Naive thymus-derived CD4-positive, alpha-beta T cell (primary cell): ENCODE measurements at regions of chr2 and their contacts with region 1.

Region 1: DNA sequence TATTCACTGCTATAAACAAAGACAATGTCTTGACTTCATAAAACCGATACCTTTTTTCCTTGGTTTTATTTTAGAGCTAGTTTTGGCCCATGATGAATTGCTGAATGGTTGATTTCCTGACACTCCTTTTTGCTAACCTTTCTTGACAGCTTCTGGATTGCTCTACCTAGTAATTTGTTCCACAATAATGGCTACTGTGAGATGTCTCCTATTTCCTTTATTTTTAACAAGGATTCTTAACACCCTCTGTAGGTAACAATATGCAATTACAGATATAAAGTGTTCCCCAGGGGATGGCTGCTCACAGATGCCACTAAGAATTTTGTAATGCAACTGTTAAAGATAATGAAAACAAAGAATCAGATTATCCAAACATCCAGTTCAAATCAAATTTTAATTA is 100.8 kb upstream of the ATP5MC3 start:
- DNase-seq: peak in 5 of 9 donors; percentile 4 to 16 (median 7)
- ATAC-seq: peak; percentile 61
- H3K4me3 ChIP-seq: no peak overlapping the region
- H3K4me3 Mint-ChIP-seq: no peak overlapping the region
- H3K27ac ChIP-seq: no peak overlapping the region
- H3K27ac Mint-ChIP-seq: no peak overlapping the region
- H3K4me1 ChIP-seq: no peaks in the 10 kb centered on the region
- H3K4me1 Mint-ChIP-seq: no peaks in the 10 kb centered on the region
- H3K27me3 ChIP-seq: no peaks in the 10 kb centered on the region
- H3K27me3 Mint-ChIP-seq: peaks cover 0 to 15% (median 3%) of the 10 kb centered on the region in 5 donors

Region 2: GRCh38 chr2:173545364-173545763 is 1736.9 kb before region 1 on chr2:
- CTCF ChIA-PET with region 1: no interaction called
- POLR2A ChIA-PET with region 1: no interaction called
- intact Hi-C with region 1: no loop called
- DNase-seq: no peak
- ATAC-seq: no peak
- H3K4me3 ChIP-seq: no peak overlapping the region
- H3K4me3 Mint-ChIP-seq: no peak overlapping the region
- H3K27ac ChIP-seq: no peak overlapping the region
- H3K27ac Mint-ChIP-seq: no peak overlapping the region
- H3K4me1 ChIP-seq: no peaks in the 10 kb centered on the region
- H3K4me1 Mint-ChIP-seq: peaks cover 0 to 3% (median 0%) of the 10 kb centered on the region in 7 donors
- H3K27me3 ChIP-seq: no peaks in the 10 kb centered on the region
- H3K27me3 Mint-ChIP-seq: peaks cover 9 to 33% (median 24%) of the 10 kb centered on the region in 5 donors

Region 3: GRCh38 chr2:174859563-174860169 is 422.6 kb before region 1 on chr2:
- CTCF ChIA-PET with region 1: no interaction called
- POLR2A ChIA-PET with region 1: no interaction called
- intact Hi-C with region 1: no loop called
- DNase-seq: no peak
- ATAC-seq: no peak
- H3K4me3 ChIP-seq: no peak overlapping the region
- H3K4me3 Mint-ChIP-seq: no peak overlapping the region
- H3K27ac ChIP-seq: no peak overlapping the region
- H3K27ac Mint-ChIP-seq: peak overlapping the region in 1 of 9 donors; percentile 14
- H3K4me1 ChIP-seq: no peaks in the 10 kb centered on the region
- H3K4me1 Mint-ChIP-seq: no peaks in the 10 kb centered on the region
- H3K27me3 ChIP-seq: no peaks in the 10 kb centered on the region
- H3K27me3 Mint-ChIP-seq: no peaks in the 10 kb centered on the region

Region 4: GRCh38 chr2:175203621-175204496 is 78.4 kb before region 1 on chr2:
- CTCF ChIA-PET with region 1: interaction called, 3 read pairs
- POLR2A ChIA-PET with region 1: no interaction called
- intact Hi-C with region 1: loop called (anchors 1 kb)
- DNase-seq: peak; percentile 9 to 61 (median 28)
- ATAC-seq: peak; percentile 85
- H3K4me3 ChIP-seq: no peak overlapping the region
- H3K4me3 Mint-ChIP-seq: peak overlapping the region in 1 of 10 donors; percentile 37
- H3K27ac ChIP-seq: no peak overlapping the region
- H3K27ac Mint-ChIP-seq: no peak overlapping the region
- H3K4me1 ChIP-seq: no peaks in the 10 kb centered on the region
- H3K4me1 Mint-ChIP-seq: peaks cover 0 to 6% (median 4%) of the 10 kb centered on the region in 7 donors
- H3K27me3 ChIP-seq: no peaks in the 10 kb centered on the region
- H3K27me3 Mint-ChIP-seq: peaks cover 6 to 35% (median 23%) of the 10 kb centered on the region in 5 donors

Region 5: GRCh38 chr2:175500255-175500654 is 218.0 kb after region 1 on chr2:
- CTCF ChIA-PET with region 1: no interaction called
- POLR2A ChIA-PET with region 1: no interaction called
- intact Hi-C with region 1: no loop called
- DNase-seq: no peak
- ATAC-seq: no peak
- H3K4me3 ChIP-seq: no peak overlapping the region
- H3K4me3 Mint-ChIP-seq: no peak overlapping the region
- H3K27ac ChIP-seq: no peak overlapping the region
- H3K27ac Mint-ChIP-seq: no peak overlapping the region
- H3K4me1 ChIP-seq: no peaks in the 10 kb centered on the region
- H3K4me1 Mint-ChIP-seq: no peaks in the 10 kb centered on the region
- H3K27me3 ChIP-seq: no peaks in the 10 kb centered on the region
- H3K27me3 Mint-ChIP-seq: peaks cover 0 to 22% (median 10%) of the 10 kb centered on the region in 5 donors

Region 6: GRCh38 chr2:176317199-176317598 is 1034.9 kb after region 1 on chr2:
- CTCF ChIA-PET with region 1: no interaction called
- POLR2A ChIA-PET with region 1: no interaction called
- intact Hi-C with region 1: no loop called
- DNase-seq: no peak
- ATAC-seq: no peak
- H3K4me3 ChIP-seq: no peak overlapping the region
- H3K4me3 Mint-ChIP-seq: no peak overlapping the region
- H3K27ac ChIP-seq: no peak overlapping the region
- H3K27ac Mint-ChIP-seq: no peak overlapping the region
- H3K4me1 ChIP-seq: no peaks in the 10 kb centered on the region
- H3K4me1 Mint-ChIP-seq: peaks cover 0 to 14% (median 4%) of the 10 kb centered on the region in 7 donors
- H3K27me3 ChIP-seq: no peaks in the 10 kb centered on the region
- H3K27me3 Mint-ChIP-seq: no peaks in the 10 kb centered on the region